Right ventricle myocardium inferior (tissue), 1 donor: ENCODE measurements at regions of chr19 and their contacts with region 1.

Region 1: DNA sequence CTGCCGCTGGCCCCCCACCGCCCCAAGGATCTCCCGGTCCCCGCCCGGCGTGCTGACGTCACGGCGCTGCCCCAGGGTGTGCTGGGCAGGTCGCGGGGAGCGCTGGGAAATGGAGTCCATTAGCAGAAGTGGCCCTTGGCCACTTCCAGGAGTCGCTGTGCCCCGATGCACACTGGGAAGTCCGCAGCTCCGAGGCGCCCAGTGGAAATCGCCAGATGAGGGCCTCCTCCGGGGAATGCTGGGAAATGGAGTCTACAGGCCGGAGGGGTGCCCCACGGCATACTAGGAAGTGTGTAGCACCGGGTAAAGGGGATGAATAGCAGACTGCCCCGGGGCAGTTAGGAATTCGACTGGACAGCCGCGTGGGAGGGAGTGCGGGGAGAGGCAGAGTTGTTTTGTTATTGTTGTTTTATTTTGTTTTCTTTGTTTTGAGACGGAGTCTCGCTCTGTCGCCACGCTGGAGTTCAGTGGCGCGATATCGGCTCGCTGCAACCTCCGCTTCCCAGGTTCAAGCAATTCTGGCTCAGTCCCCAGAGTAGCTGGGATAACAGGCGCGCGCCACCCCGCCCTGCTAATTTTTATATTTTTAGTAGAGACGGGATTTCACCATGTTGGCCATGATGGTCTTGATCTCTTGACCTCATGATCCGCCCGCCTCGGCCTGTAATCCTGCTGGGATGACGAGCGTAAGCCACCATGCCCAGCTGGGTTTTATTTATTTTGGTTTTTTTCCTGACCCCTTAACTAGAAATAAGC is at the start of gene PPP1R12C:
- DNase-seq: peak; percentile 100
- ATAC-seq: peak; percentile 87
- total RNA-seq, gene PPP1R12C: 140 TPM

Region 2: DNA sequence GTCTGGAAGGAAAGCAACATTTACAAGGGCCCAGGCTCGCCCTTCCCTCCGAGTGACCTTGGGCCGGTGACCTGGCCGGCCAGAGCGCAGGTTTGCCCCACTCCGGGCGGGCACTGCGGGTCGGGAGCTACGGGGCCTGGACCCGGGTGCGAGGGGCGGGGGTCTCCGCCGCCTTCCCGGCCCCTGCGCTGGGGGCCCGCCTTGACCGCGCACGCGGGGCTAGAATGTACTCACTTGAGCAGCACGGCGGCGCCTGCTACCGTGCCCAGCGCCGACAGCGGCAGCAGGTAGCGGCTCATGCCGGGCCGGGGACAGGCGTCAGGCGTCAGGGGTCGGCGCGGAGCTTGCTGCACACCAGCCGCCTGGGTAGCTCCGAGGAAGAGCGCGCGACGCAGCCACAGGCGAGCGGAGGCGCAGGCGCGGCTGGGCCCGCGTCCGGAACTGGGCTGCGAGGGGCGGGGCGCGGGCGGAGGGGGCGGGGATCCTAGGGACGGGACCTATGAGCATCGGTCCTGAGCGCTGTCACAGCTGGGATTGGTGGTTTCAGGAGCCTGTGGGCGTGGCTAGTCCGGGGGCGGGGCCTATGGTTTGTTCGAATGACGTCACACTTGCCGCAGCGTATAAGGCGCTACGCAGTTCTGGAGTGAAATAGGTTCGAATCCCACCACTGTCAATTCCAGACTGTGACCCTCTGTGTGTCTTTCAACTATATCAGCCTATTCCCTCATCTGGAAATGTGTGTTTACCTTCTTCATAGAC is 54.9 kb before region 1 on chr19 and contains the start of gene RDH13:
- intact Hi-C with region 1: loop called (anchors 2 kb)
- DNase-seq: peak; percentile 98
- ATAC-seq: peak; percentile 100
- total RNA-seq, gene RDH13: 47.8 TPM

Region 3: GRCh38 chr19:55075687-55076003 is 42.2 kb before region 1 on chr19 and contains the start of gene EPS8L1:
- intact Hi-C with region 1: no loop called
- DNase-seq: no peak
- ATAC-seq: no peak
- total RNA-seq, gene EPS8L1: 1.9 TPM

Region 4: GRCh38 chr19:55086693-55087541 is 30.9 kb before region 1 on chr19:
- intact Hi-C with region 1: loop called (anchors 2 kb)
- DNase-seq: peak; percentile 96
- ATAC-seq: peak; percentile 86

Region 5: DNA sequence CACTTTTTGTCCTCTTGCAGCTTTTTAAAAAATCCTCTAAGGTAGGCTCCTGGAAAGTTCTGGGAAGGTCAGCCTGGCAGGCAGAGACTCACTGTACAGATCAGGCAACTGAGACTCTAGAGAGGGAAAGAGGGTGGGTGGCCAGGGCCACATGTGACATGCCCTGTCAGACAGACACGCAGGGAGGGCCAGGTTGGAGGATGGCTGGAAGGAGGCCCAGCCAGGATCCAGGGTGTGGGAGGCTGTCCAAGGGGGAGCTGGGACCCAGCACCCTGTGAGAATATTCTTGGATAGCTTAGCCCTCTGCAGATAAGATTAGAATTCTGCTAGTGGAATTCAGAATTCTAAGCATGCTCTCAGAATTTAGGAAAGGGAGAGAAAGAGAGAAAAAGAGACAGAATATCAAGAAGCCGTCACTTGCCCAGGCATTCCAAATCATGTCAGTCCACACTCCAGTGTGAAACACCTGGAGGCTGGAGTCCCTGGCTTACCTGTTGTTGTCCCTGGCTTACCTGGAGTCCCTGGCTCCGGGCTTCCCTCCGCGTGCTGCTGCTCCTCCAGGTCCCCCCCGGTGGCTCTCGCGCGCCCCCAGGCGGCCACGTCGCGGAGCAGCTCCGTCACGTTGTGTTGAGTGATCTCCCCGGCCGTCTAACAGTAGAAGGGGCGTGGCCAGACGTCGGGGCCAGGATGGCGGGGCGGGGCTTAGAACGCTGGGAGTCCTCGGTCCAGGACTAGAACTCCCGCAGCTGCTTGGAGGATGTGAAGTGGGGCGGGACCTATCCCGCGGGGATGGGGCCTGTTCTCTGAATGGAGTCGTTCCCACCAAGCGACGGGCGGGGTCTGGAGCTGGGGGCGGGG is 42.5 kb after region 1 on chr19:
- intact Hi-C with region 1: loop called (anchors 5 kb)
- DNase-seq: peak; percentile 91
- ATAC-seq: peak; percentile 54